Left ventricle myocardium superior (tissue), 1 donor: ENCODE measurements at regions of chr4 and their contacts with region 1.

Region 1: GRCh38 chr4:168995537-168996295 is 14.3 kb downstream of the CBR4 start:
- DNase-seq: no peak
- ATAC-seq: peak; percentile 67

Region 2: GRCh38 chr4:169159624-169160171 is 164.0 kb after region 1 on chr4:
- intact Hi-C with region 1: no loop called
- DNase-seq: no peak
- ATAC-seq: no peak

Region 3: GRCh38 chr4:169566021-169566818 is 570.5 kb after region 1 on chr4:
- intact Hi-C with region 1: loop called (anchors 10 kb)
- DNase-seq: no peak
- ATAC-seq: peak; percentile 78